Heart left ventricle (tissue), 16 donors: ENCODE measurements at regions of chr2 and their contacts with region 1.

Region 1: GRCh38 chr2:8681786-8682692 is at the start of gene ID2:
- DNase-seq: peak; percentile 99 to 100 (median 100)
- ATAC-seq: peak; percentile 82 to 89 (median 87)
- H3K4me3 ChIP-seq: peak within 1 kb of the TSS; percentile 68 to 92 (median 84)
- H3K27ac ChIP-seq: peak within 1 kb of the TSS; percentile 88 to 100 (median 99)
- H3K4me1 ChIP-seq: peaks cover 0 to 50% (median 33%) of the 10 kb centered on the region in 12 donors
- H3K27me3 ChIP-seq: peaks cover 0 to 3% (median 0%) of the 10 kb centered on the region in 9 donors
- CTCF ChIP-seq: no peak
- POLR2A ChIP-seq: peak; percentile 93 to 100
- total RNA-seq, gene ID2: 17.3 to 121 (median 25.5) TPM

Region 2: DNA sequence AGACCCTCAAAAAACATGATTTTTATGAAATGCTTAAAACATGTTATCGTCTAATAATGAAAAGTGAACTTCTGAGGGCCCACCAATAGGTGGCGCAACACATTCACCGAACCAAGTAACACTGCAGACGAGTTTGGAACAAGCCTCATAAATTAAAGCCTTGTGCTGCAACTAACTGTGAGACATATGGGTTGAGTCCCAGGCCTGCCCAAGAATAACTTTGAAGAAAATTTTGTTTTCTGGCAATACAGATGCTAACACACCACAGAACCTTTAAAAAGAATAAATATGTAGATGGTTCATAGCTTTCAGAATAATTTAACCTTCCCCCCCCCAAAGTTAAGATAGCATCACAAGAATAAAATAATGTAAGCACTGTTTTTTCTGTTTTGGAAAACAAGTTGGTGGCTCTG is 1479.0 kb before region 1 on chr2:
- intact Hi-C with region 1: loop called in 8 of 10 experiments (anchors 5 kb)
- DNase-seq: peak in 2 of 5 donors; percentile 19 to 33
- ATAC-seq: peak in 2 of 4 donors; percentile 45 to 53
- H3K4me3 ChIP-seq: no peak overlapping the region
- H3K27ac ChIP-seq: no peak overlapping the region
- H3K4me1 ChIP-seq: no peaks in the 10 kb centered on the region
- H3K27me3 ChIP-seq: no peaks in the 10 kb centered on the region
- CTCF ChIP-seq: peak; percentile 75 to 96 (median 86)
- POLR2A ChIP-seq: no peak

Region 3: GRCh38 chr2:7593360-7593759 is 1088.7 kb before region 1 on chr2:
- intact Hi-C with region 1: no loop called
- DNase-seq: no peak
- ATAC-seq: no peak
- H3K4me3 ChIP-seq: no peak overlapping the region
- H3K27ac ChIP-seq: no peak overlapping the region
- H3K4me1 ChIP-seq: no peaks in the 10 kb centered on the region
- H3K27me3 ChIP-seq: no peaks in the 10 kb centered on the region
- CTCF ChIP-seq: no peak
- POLR2A ChIP-seq: no peak

Region 4: DNA sequence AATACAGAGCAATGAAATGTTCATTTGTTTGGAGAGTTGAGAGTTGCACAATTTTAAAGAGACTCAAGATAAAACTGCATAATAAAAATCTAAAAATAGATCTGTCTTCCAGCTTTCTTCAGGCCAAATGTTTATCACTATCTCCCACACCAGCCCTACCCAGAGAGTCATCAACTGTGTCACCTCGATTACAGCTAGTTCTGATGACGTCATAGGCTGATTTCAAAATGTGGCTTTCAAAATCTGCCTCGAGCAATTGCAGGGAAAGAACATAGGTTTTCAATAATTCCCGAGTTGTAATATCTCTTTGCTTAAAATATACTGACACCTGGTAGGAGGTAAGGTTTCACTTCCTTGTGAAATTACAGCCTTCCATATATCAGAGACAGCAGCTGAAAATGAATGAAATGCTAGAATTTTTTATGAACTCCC is 677.8 kb before region 1 on chr2:
- intact Hi-C with region 1: loop called in 7 of 10 experiments (anchors 5 to 10 kb)
- DNase-seq: peak in 2 of 5 donors; percentile 24 to 46
- ATAC-seq: peak; percentile 52 to 91 (median 74)
- H3K4me3 ChIP-seq: peak overlapping the region in 3 of 12 donors; percentile 6 to 8 (median 7)
- H3K27ac ChIP-seq: peak overlapping the region; percentile 46 to 95 (median 78)
- H3K4me1 ChIP-seq: peaks cover 0 to 28% (median 15%) of the 10 kb centered on the region in 12 donors
- H3K27me3 ChIP-seq: no peaks in the 10 kb centered on the region
- CTCF ChIP-seq: no peak
- POLR2A ChIP-seq: no peak

Region 5: GRCh38 chr2:8215159-8215863 is 466.7 kb before region 1 on chr2:
- intact Hi-C with region 1: loop called in 5 of 10 experiments (anchors 5 to 10 kb)
- DNase-seq: no peak
- ATAC-seq: no peak
- H3K4me3 ChIP-seq: peak overlapping the region in 1 of 12 donors; percentile 2
- H3K27ac ChIP-seq: peak overlapping the region in 1 of 12 donors; percentile 8
- H3K4me1 ChIP-seq: peaks cover 0 to 16% (median 5%) of the 10 kb centered on the region in 12 donors
- H3K27me3 ChIP-seq: no peaks in the 10 kb centered on the region
- CTCF ChIP-seq: no peak
- POLR2A ChIP-seq: no peak

Region 6: DNA sequence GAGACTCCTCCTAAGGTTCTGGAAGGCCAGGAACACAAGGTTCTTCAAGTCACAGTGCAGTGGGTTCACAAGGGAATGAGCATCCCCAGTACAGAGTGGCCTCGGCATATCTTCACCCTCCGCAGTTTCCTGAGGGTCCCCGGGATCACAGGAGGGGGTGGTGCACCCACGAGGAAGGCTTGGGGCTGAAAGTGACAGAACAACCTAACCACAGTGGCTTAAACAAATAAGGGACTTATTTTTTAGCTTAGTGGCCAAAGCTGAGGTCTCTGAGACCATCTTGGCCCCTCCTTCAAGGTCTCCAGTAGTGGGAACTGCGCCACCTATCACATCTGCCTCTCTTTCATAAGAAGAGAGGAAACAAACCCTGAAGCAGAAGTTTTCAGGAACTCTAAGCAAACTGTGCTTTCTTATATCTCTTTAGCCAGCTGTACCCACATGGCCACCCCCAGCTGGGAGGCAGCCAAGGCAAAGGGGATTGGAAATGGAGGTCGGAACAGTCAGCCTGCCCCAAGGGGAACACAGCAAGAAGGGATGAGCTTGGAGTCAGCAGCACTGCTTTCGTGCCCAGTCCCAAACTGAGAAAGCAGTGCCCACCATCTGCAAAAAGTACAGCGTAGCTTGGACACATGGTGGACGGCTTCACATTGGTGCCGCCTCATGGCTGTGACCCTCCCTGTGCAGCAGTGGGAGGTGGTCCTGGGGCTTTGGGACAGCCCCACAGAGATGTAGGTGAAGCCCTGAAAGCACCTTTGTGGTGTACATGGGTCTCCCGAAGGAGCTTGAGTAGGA is 260.2 kb before region 1 on chr2:
- intact Hi-C with region 1: loop called in 1 of 10 experiments (anchors 10 kb)
- DNase-seq: no peak
- ATAC-seq: no peak
- H3K4me3 ChIP-seq: no peak overlapping the region
- H3K27ac ChIP-seq: no peak overlapping the region
- H3K4me1 ChIP-seq: peaks cover 0 to 23% (median 0%) of the 10 kb centered on the region in 12 donors
- H3K27me3 ChIP-seq: no peaks in the 10 kb centered on the region
- CTCF ChIP-seq: no peak
- POLR2A ChIP-seq: no peak

Region 7: GRCh38 chr2:8441986-8442385 is 240.1 kb before region 1 on chr2:
- intact Hi-C with region 1: no loop called
- DNase-seq: no peak
- ATAC-seq: no peak
- H3K4me3 ChIP-seq: no peak overlapping the region
- H3K27ac ChIP-seq: no peak overlapping the region
- H3K4me1 ChIP-seq: peaks cover 0 to 18% (median 5%) of the 10 kb centered on the region in 12 donors
- H3K27me3 ChIP-seq: no peaks in the 10 kb centered on the region
- CTCF ChIP-seq: no peak
- POLR2A ChIP-seq: no peak

Region 8: GRCh38 chr2:8495189-8495989 is 186.7 kb before region 1 on chr2:
- intact Hi-C with region 1: no loop called
- DNase-seq: no peak
- ATAC-seq: no peak
- H3K4me3 ChIP-seq: no peak overlapping the region
- H3K27ac ChIP-seq: peak overlapping the region in 6 of 12 donors; percentile 27 to 63 (median 52)
- H3K4me1 ChIP-seq: peaks cover 0 to 84% (median 42%) of the 10 kb centered on the region in 12 donors
- H3K27me3 ChIP-seq: no peaks in the 10 kb centered on the region
- CTCF ChIP-seq: no peak
- POLR2A ChIP-seq: no peak

Region 9: GRCh38 chr2:8525582-8526402 is 156.2 kb before region 1 on chr2:
- intact Hi-C with region 1: loop called in 6 of 10 experiments (anchors 2 to 10 kb)
- DNase-seq: peak; percentile 84 to 91 (median 87)
- ATAC-seq: peak; percentile 83 to 93 (median 87)
- H3K4me3 ChIP-seq: no peak overlapping the region
- H3K27ac ChIP-seq: peak overlapping the region in 3 of 12 donors; percentile 33 to 72 (median 35)
- H3K4me1 ChIP-seq: peaks cover 3 to 56% (median 16%) of the 10 kb centered on the region in 12 donors
- H3K27me3 ChIP-seq: no peaks in the 10 kb centered on the region
- CTCF ChIP-seq: peak in 11 of 12 donors; percentile 18 to 55 (median 30)
- POLR2A ChIP-seq: no peak

Region 10: DNA sequence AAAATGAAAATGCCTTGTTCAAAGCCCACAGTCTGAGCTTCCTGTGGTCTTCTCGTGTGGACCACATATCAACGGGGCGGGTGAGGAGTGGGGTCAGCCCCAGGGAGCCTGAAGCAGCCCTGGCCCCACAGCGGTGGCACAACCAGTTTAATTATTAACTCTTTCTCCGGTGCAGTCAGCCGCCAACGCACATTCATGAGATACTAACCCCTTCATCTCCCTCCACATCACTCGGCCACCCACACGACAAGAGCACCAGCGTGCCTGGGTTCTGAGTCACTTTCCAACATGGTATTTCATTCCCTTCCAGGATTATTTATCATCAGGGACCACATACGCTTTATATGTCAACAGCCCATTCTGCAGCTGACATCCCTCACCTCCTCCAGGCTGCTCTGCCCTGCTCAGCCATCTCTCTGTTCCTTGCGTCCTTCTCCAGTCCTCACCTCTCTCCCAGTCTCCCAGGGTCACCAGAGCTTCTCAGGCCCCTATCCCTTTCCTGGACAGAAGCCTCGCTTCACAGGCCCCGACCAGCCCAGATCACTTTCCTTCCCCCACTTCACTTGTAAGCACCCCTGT is 48.2 kb before region 1 on chr2:
- intact Hi-C with region 1: no loop called
- DNase-seq: no peak
- ATAC-seq: peak; percentile 21 to 72 (median 50)
- H3K4me3 ChIP-seq: no peak overlapping the region
- H3K27ac ChIP-seq: no peak overlapping the region
- H3K4me1 ChIP-seq: peaks cover 0 to 11% (median 0%) of the 10 kb centered on the region in 12 donors
- H3K27me3 ChIP-seq: no peaks in the 10 kb centered on the region
- CTCF ChIP-seq: no peak
- POLR2A ChIP-seq: no peak